ENCODE measurements at regions of chr3 and their contacts with region 1.

Region 1: DNA sequence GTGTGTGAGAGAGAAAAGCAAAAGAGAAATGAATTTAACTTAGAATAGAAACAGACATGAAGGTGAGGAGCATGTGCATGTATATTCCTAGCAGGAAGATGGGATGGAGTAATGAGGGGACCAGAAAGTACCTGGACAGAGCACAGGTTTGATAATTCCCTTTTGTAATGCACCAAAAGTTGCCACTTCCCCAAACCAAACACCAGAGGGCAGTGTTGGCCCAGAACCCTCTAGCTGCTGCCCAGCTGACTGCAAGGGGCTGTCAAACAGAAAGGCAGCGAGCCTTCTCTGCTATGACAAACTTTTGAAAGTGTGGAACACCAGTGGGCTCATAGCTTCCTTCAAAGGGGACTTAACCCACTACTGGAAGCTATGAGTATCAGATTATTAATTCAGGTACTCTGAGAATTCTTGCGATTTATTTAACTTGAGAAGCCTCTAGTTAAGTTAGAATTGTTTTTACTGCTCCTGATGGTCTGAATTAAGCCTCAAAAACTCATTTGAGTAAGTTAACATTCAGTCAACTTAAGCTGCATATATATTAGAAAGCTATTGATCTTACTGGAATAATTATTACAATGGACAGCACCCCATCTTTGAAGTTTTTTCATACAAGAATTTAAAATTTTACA is 234.9 kb downstream of the NEK10 start:
- DNase-seq: peak; percentile 39 to 56
- ATAC-seq: peak; percentile 52 to 82 (median 76)
- H3K4me3 ChIP-seq: no peak overlapping the region
- H3K27ac ChIP-seq: no peak overlapping the region
- H3K4me1 ChIP-seq: peaks cover 0 to 9% (median 0%) of the 10 kb centered on the region in 9 donors
- H3K27me3 ChIP-seq: no peaks in the 10 kb centered on the region
- CTCF ChIP-seq: peak; percentile 71 to 93 (median 89)

Region 2: DNA sequence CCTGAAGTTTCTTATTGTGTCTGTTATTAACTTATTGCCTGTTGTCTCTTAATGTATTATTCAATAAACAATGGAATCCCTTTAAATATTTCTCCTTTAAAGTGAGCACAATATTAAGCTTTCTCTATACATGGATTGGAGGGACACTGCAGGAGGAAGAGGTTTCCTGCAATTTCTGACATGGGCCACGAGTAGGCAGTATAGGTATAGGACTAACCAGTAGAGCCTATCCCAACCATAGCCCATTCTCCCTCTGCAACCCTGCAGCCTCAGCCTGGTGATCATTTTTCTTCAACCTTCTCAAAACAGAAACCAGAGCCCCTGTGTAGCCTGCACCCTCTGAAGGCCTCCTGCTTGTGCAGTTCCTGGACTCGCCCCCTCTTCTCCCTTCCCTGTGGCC is 110.1 kb after region 1 on chr3:
- intact Hi-C with region 1: loop called in 2 of 10 experiments (anchors 10 kb)
- DNase-seq: no peak
- ATAC-seq: no peak
- H3K4me3 ChIP-seq: no peak overlapping the region
- H3K27ac ChIP-seq: no peak overlapping the region
- H3K4me1 ChIP-seq: no peaks in the 10 kb centered on the region
- H3K27me3 ChIP-seq: no peaks in the 10 kb centered on the region
- CTCF ChIP-seq: no peak

Region 3: DNA sequence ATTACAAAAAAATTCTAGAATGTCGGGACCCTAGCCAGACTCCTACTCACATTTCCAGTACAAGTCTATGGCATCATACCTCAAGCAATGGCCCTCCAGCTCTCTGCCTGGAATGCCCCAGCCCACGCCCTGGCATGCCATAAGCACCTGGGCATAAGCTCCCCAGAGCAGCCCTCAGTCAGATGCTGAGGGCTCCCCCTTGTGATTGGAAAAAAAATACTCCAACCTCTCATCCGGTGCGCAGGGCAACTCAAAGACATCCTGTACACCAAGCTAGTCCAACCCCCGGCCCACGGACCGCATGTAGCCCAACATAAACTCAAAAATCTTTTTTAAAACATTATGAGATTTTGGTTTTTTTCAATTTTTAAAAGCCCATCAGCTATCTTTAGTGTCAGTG is 119.5 kb after region 1 on chr3:
- intact Hi-C with region 1: loop called in 6 of 10 experiments (anchors 1 to 10 kb)
- DNase-seq: peak in 1 of 2 donors; percentile 3
- ATAC-seq: peak in 3 of 8 donors; percentile 49 to 78 (median 72)
- H3K4me3 ChIP-seq: no peak overlapping the region
- H3K27ac ChIP-seq: no peak overlapping the region
- H3K4me1 ChIP-seq: no peaks in the 10 kb centered on the region
- H3K27me3 ChIP-seq: no peaks in the 10 kb centered on the region
- CTCF ChIP-seq: peak in 7 of 9 donors; percentile 21 to 49 (median 39)

Region 4: GRCh38 chr3:27279123-27279522 is 144.8 kb after region 1 on chr3:
- intact Hi-C with region 1: loop called in 6 of 10 experiments (anchors 2 to 10 kb)
- DNase-seq: no peak
- ATAC-seq: peak in 1 of 8 donors; percentile 58
- H3K4me3 ChIP-seq: no peak overlapping the region
- H3K27ac ChIP-seq: no peak overlapping the region
- H3K4me1 ChIP-seq: peaks cover 0 to 10% (median 0%) of the 10 kb centered on the region in 9 donors
- H3K27me3 ChIP-seq: no peaks in the 10 kb centered on the region
- CTCF ChIP-seq: peak in 8 of 9 donors; percentile 6 to 64 (median 48)

Region 5: GRCh38 chr3:27467545-27467944 is 333.3 kb after region 1 on chr3:
- intact Hi-C with region 1: loop called in 2 of 10 experiments (anchors 10 kb)
- DNase-seq: no peak
- ATAC-seq: peak in 6 of 8 donors; percentile 38 to 78 (median 66)
- H3K4me3 ChIP-seq: no peak overlapping the region
- H3K27ac ChIP-seq: peak overlapping the region in 1 of 10 donors; percentile 3
- H3K4me1 ChIP-seq: peaks cover 0 to 15% (median 3%) of the 10 kb centered on the region in 9 donors
- H3K27me3 ChIP-seq: no peaks in the 10 kb centered on the region
- CTCF ChIP-seq: peak in 8 of 9 donors; percentile 21 to 67 (median 55)

Region 6: GRCh38 chr3:27681245-27681748 is 547.0 kb after region 1 on chr3:
- intact Hi-C with region 1: loop called in 1 of 10 experiments (anchors 10 kb)
- DNase-seq: peak in 1 of 2 donors; percentile 38
- ATAC-seq: peak in 7 of 8 donors; percentile 20 to 67 (median 51)
- H3K4me3 ChIP-seq: peak overlapping the region in 2 of 10 donors; percentile 19 to 26
- H3K27ac ChIP-seq: peak overlapping the region in 2 of 10 donors; percentile 48 to 51
- H3K4me1 ChIP-seq: peaks cover 0 to 13% (median 5%) of the 10 kb centered on the region in 9 donors
- H3K27me3 ChIP-seq: no peaks in the 10 kb centered on the region
- CTCF ChIP-seq: peak; percentile 31 to 71 (median 65)

Measured in heart right ventricle (tissue), 16 donors.